ENCODE measurements at regions of chr10 and their contacts with region 1.

Region 1: GRCh38 chr10:100481462-100482081 is 18.8 kb downstream of the WNT8B start:
- DNase-seq: peak; percentile 89
- ATAC-seq: peak; percentile 76
- H3K4me3 Mint-ChIP-seq: peak overlapping the region; percentile 75
- H3K27ac Mint-ChIP-seq: no peak overlapping the region
- H3K4me1 Mint-ChIP-seq: peaks cover 40% of the 10 kb centered on the region
- H3K27me3 Mint-ChIP-seq: peaks cover 94% of the 10 kb centered on the region
- CTCF ChIP-seq: no peak

Region 2: GRCh38 chr10:100020142-100020885 is 461.3 kb before region 1 on chr10:
- CTCF ChIA-PET with region 1: no interaction called
- POLR2A ChIA-PET with region 1: no interaction called
- DNase-seq: no peak
- ATAC-seq: peak; percentile 16; the same call in 1 of the 2 replicates
- H3K4me3 Mint-ChIP-seq: no peak overlapping the region
- H3K27ac Mint-ChIP-seq: peak overlapping the region; percentile 14; the same call in 1 of the 2 replicates
- H3K4me1 Mint-ChIP-seq: peaks cover 14% of the 10 kb centered on the region
- H3K27me3 Mint-ChIP-seq: no peaks in the 10 kb centered on the region
- CTCF ChIP-seq: no peak

Region 3: GRCh38 chr10:100245484-100246220 is 235.9 kb before region 1 on chr10:
- CTCF ChIA-PET with region 1: no interaction called
- POLR2A ChIA-PET with region 1: no interaction called
- DNase-seq: no peak
- ATAC-seq: no peak
- H3K4me3 Mint-ChIP-seq: no peak overlapping the region
- H3K27ac Mint-ChIP-seq: no peak overlapping the region
- H3K4me1 Mint-ChIP-seq: no peaks in the 10 kb centered on the region
- H3K27me3 Mint-ChIP-seq: no peaks in the 10 kb centered on the region
- CTCF ChIP-seq: no peak

Region 4: DNA sequence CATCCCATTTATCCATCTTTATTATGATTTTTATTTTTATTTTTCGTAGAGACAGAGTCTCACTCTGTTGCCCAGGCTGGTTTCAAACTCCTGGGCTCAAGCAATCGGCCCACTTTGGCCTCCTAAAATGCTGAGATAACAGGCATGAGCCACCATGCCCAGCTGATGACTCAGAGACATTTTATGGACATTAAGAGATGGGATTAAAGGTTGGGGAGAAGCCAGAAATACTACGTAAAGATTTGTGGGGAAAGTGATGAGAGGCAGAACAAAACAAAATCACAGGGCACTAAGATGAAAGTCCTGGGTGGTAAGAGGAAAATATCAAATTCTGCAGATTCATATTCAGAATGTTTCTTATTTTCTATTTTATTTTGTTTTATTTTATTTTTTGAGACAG is 11.2 kb before region 1 on chr10:
- CTCF ChIA-PET with region 1: interaction called, 21 read pairs
- POLR2A ChIA-PET with region 1: no interaction called
- DNase-seq: no peak
- ATAC-seq: no peak
- H3K4me3 Mint-ChIP-seq: no peak overlapping the region
- H3K27ac Mint-ChIP-seq: no peak overlapping the region
- H3K4me1 Mint-ChIP-seq: no peaks in the 10 kb centered on the region
- H3K27me3 Mint-ChIP-seq: peaks cover 90% of the 10 kb centered on the region
- CTCF ChIP-seq: no peak

Region 5: DNA sequence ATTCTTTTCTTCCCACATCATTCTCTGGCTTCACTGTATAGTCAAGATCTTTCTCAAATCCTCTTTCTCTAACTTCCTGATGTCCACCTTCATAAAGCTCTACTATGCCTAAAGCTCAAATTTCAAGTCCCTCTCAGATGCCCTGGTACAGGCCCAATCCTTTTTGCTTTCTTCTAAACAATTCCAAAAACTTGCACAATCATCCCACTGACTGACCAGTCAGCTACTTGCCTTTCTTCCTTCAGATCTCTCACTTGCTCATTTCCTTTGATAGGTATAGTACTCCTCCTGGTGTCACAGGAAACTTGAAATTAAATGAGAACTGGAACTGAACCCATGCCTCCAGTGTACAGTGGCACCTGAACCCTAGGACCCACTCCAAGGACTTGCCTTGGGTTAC is 19.9 kb after region 1 on chr10:
- CTCF ChIA-PET with region 1: interaction called, 120 read pairs
- POLR2A ChIA-PET with region 1: no interaction called
- DNase-seq: no peak
- ATAC-seq: no peak
- H3K4me3 Mint-ChIP-seq: no peak overlapping the region
- H3K27ac Mint-ChIP-seq: no peak overlapping the region
- H3K4me1 Mint-ChIP-seq: no peaks in the 10 kb centered on the region
- H3K27me3 Mint-ChIP-seq: peaks cover 92% of the 10 kb centered on the region
- CTCF ChIP-seq: no peak

Region 6: GRCh38 chr10:100535715-100536353 is 54.3 kb after region 1 on chr10 and contains the start of gene HIF1AN:
- CTCF ChIA-PET with region 1: interaction called, 21 read pairs
- POLR2A ChIA-PET with region 1: no interaction called
- DNase-seq: peak; percentile 86
- ATAC-seq: peak; percentile 98
- H3K4me3 Mint-ChIP-seq: no peak within 1 kb of the TSS
- H3K27ac Mint-ChIP-seq: peak within 1 kb of the TSS; percentile 73
- H3K4me1 Mint-ChIP-seq: peaks cover 7% of the 10 kb centered on the region; the same call in 1 of the 2 replicates
- H3K27me3 Mint-ChIP-seq: no peaks in the 10 kb centered on the region
- CTCF ChIP-seq: peak; percentile 69
- total RNA-seq, gene HIF1AN: 49.9 to 58.3 TPM (median 53.9 TPM) in 3 replicates

Measured in WTC11 (cell line).